ENCODE measurements at regions of chr9 and their contacts with region 1.

Region 1: GRCh38 chr9:38263532-38263931 is 129.0 kb upstream of the ALDH1B1 start:
- DNase-seq: peak; percentile 48
- ATAC-seq: no peak
- H3K4me3 ChIP-seq: no peak overlapping the region
- H3K27ac ChIP-seq: no peak overlapping the region
- H3K4me1 ChIP-seq: no peaks in the 10 kb centered on the region
- H3K27me3 ChIP-seq: peaks cover 5% of the 10 kb centered on the region
- CTCF ChIP-seq: peak; percentile 67
- POLR2A ChIP-seq: no peak
- RAD21 ChIP-seq: peak; percentile 80

Region 2: DNA sequence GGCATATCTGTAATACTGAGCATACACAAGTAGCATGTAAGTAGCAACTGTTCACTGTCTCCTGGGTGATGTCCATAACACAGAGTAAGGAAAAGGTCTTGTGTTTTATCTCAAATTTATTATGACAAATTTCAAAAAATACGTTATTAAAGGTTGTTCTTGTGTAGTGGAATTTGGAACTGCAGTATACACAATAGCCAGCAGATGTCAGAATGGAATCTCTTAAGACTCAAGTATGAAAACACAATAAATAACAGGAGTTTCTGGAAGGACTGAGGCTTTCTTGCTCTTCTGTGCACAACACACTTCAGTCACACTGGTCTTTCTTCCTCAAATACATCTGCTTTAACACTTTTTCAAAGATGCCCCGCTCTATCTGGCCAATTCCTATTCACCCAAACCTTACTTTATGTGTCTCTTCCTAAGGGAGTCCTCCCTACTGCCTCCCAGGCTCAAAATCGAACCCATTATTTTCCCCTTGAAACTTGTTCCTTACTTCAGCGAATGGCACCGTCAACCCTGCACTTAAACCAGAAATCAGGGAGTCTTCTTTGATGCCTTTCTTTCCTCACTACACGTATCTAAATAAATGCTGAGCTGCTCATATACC is 680.9 kb before region 1 on chr9:
- CTCF ChIA-PET with region 1: no interaction called
- POLR2A ChIA-PET with region 1: no interaction called
- dilution Hi-C with region 1: no loop called
- in situ Hi-C with region 1: no loop called
- intact Hi-C with region 1: loop called (anchors 5 kb)
- DNase-seq: peak; percentile 86
- ATAC-seq: peak; percentile 93
- H3K4me3 ChIP-seq: no peak overlapping the region
- H3K27ac ChIP-seq: no peak overlapping the region
- H3K4me1 ChIP-seq: no peaks in the 10 kb centered on the region
- H3K27me3 ChIP-seq: no peaks in the 10 kb centered on the region
- CTCF ChIP-seq: peak; percentile 75
- POLR2A ChIP-seq: no peak
- RAD21 ChIP-seq: peak; percentile 70

Region 3: DNA sequence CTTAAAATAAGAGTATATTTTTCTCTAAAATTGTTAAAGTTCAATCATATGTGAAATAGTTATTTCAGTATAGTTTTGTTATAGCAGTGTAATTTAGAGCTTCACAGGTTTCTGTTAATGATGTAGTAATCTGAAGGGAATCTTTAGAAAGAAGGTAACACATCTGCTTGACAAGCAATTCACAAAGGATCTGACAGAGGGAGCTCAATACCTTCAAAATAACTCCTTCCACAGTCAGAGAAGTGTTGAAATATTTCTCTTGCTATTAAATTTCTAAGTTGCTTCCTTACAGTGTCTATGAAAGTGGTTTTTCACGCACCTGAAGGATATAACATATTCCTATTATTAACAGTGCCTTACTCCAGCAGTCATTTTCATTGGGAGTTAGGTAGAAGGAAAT is 404.5 kb before region 1 on chr9:
- CTCF ChIA-PET with region 1: no interaction called
- POLR2A ChIA-PET with region 1: no interaction called
- dilution Hi-C with region 1: no loop called
- in situ Hi-C with region 1: no loop called
- intact Hi-C with region 1: loop called (anchors 5 kb)
- DNase-seq: peak; percentile 33
- ATAC-seq: no peak
- H3K4me3 ChIP-seq: no peak overlapping the region
- H3K27ac ChIP-seq: no peak overlapping the region
- H3K4me1 ChIP-seq: no peaks in the 10 kb centered on the region
- H3K27me3 ChIP-seq: no peaks in the 10 kb centered on the region
- CTCF ChIP-seq: peak; percentile 40
- POLR2A ChIP-seq: no peak
- RAD21 ChIP-seq: peak; percentile 26

Region 4: DNA sequence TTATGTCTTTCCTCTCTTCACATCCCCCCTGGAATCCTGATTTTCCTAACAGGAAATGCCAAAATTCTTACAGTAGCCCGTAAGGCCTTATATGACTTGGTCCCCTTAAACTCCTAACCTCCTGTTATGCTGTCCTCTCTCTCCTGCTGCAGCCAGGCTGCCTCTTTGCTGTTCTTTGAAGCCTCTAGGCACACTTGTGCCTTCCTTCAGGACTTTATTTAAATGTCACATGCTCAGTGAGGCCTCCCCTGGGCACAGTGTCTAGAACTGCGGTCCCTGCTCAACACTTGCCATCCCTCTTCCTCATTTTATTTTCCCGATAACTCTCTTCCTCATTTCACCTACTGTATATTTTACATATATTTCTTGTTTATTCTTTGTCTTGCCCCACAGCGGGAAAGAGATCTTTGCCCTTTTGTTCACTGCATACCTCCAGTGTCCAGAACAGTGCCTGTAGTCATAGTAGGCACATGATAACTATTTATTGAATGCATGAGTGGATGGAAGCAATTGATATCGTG is 189.0 kb before region 1 on chr9:
- CTCF ChIA-PET with region 1: interaction called, 3 read pairs
- POLR2A ChIA-PET with region 1: no interaction called
- dilution Hi-C with region 1: no loop called
- in situ Hi-C with region 1: no loop called
- intact Hi-C with region 1: loop called (anchors 5 kb)
- DNase-seq: peak; percentile 61
- ATAC-seq: peak; percentile 78
- H3K4me3 ChIP-seq: no peak overlapping the region
- H3K27ac ChIP-seq: peak overlapping the region; percentile 94
- H3K4me1 ChIP-seq: peaks cover 13% of the 10 kb centered on the region
- H3K27me3 ChIP-seq: no peaks in the 10 kb centered on the region
- CTCF ChIP-seq: no peak
- POLR2A ChIP-seq: no peak
- RAD21 ChIP-seq: no peak

Region 5: GRCh38 chr9:38319496-38320173 is 56.1 kb after region 1 on chr9:
- CTCF ChIA-PET with region 1: no interaction called
- POLR2A ChIA-PET with region 1: no interaction called
- dilution Hi-C with region 1: no loop called
- in situ Hi-C with region 1: loop called (anchors 10 kb)
- intact Hi-C with region 1: no loop called
- DNase-seq: no peak
- ATAC-seq: no peak
- H3K4me3 ChIP-seq: no peak overlapping the region
- H3K27ac ChIP-seq: no peak overlapping the region
- H3K4me1 ChIP-seq: no peaks in the 10 kb centered on the region
- H3K27me3 ChIP-seq: peaks cover 23% of the 10 kb centered on the region
- CTCF ChIP-seq: no peak
- POLR2A ChIP-seq: no peak
- RAD21 ChIP-seq: no peak

Region 6: DNA sequence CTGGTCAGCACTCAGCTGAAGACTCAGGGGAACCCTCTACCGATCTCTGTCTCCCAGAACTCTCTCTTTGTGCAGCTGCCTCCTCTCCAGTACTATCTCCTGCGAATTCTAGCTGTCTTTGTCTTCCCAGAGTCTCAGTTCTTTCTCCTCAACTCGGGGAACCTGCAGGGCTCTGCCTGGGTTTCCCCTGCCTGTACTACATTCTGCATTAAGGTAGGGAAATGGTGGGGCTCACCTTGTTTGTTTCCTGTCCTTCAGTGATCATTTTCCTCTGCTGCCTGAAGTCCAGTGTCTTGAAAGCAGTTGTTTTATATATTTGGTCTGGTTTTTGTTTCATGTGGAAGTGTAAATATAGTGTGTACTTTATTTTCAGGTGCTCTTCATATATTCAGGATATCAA is 203.9 kb after region 1 on chr9:
- CTCF ChIA-PET with region 1: no interaction called
- POLR2A ChIA-PET with region 1: no interaction called
- dilution Hi-C with region 1: no loop called
- in situ Hi-C with region 1: no loop called
- intact Hi-C with region 1: no loop called
- DNase-seq: no peak
- ATAC-seq: no peak
- H3K4me3 ChIP-seq: no peak overlapping the region
- H3K27ac ChIP-seq: no peak overlapping the region
- H3K4me1 ChIP-seq: no peaks in the 10 kb centered on the region
- H3K27me3 ChIP-seq: peaks cover 5% of the 10 kb centered on the region
- CTCF ChIP-seq: no peak
- POLR2A ChIP-seq: no peak
- RAD21 ChIP-seq: no peak